ENCODE measurements at regions of chr3 and their contacts with region 1.

Region 1: GRCh38 chr3:120095226-120095978 is 1.2 kb upstream of the GSK3B start:
- DNase-seq: peak; percentile 91
- H3K4me3 Mint-ChIP-seq: no peak overlapping the region
- H3K27ac Mint-ChIP-seq: no peak overlapping the region
- H3K4me1 Mint-ChIP-seq: peaks cover 19% of the 10 kb centered on the region
- H3K27me3 Mint-ChIP-seq: no peaks in the 10 kb centered on the region

Region 2: GRCh38 chr3:118713502-118714207 is 1381.7 kb before region 1 on chr3:
- intact Hi-C with region 1: no loop called
- DNase-seq: no peak
- H3K4me3 Mint-ChIP-seq: no peak overlapping the region
- H3K27ac Mint-ChIP-seq: no peak overlapping the region
- H3K4me1 Mint-ChIP-seq: no peaks in the 10 kb centered on the region
- H3K27me3 Mint-ChIP-seq: no peaks in the 10 kb centered on the region

Region 3: DNA sequence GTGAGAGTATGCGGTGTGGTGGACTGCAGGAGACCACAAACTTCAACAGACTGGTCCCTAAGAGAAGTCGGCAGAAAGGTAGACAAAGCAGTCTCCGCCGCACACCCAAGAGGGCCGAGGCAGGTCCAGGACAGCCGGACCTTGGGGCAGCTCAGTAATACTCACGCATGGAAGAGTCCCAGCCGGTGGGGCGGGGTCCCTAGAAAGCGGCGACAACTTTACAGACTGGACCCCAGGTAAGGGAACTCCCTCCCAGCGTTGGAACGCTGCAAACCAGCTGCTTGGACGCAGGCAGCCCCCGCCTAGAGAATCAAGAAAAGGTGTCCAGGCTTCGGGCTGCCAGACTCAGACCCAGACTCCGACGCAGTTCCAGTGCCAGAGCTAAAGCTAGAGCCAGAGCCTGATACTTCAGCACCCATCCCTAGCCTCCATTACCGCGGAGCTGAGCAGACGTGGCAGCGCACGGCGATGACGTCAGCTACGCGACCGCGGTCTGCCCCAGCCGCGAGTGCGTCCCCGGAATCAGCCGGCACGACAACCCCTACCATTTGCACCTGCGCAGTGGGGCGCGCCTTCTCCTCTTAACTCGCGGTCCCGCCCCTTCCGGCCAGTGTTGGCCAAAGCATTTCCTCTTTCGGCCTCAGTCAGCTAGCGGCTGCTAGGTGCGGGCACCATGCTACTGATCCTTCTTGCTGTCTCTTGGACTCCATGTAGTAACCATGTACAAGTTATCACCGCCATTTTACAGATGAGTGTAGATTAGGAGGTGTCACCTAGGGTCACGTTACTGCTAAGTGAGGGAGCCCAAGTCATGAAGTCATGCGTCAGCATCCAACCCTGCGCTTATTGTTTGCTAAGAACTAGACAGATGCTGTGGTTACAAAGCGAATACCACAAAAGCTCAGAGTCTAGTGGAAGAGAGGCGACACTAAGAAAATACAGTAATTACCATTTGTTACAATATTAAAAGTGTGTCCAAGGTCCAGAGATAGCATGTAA is 631.9 kb before region 1 on chr3 and contains the start of gene TMEM39A:
- intact Hi-C with region 1: loop called (anchors 1 kb)
- DNase-seq: peak; percentile 98
- H3K4me3 Mint-ChIP-seq: peak within 1 kb of the TSS; percentile 98
- H3K27ac Mint-ChIP-seq: peak within 1 kb of the TSS; percentile 97
- H3K4me1 Mint-ChIP-seq: peaks cover 49% of the 10 kb centered on the region
- H3K27me3 Mint-ChIP-seq: peaks cover 3% of the 10 kb centered on the region
- total RNA-seq, gene TMEM39A: 51.3 and 56.9 TPM in 2 replicates

Region 4: DNA sequence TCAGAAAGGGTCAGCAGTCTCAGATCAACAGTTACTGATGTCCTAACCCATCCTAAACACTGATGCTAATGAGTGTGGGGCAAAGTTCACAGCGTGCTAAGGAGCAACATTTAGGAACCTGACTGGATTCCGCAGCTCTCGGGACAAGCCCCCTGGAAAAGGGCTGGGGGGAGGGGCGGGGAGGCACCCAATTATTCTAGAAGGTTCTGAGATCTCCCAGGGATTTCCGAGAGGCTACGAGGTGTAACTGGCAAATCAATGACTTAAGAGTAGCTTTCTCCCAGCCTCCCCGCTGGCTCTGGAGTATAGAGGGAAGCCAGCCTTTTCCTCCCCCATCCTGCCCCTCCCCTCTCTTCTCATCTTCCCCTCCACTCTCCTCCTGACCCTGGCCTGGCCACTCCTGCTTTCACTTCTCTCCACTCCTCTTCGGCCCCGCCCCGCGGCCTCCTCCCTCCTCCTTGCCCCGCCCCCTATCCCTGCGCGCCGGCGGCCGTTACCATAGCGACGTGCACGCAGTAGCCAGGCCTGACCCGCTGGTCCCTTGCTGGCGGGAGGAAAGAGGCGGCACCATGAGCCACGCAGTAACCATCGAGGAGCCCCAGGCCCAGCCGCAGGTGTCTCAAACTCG is 392.8 kb before region 1 on chr3 and contains the start of gene CFAP91:
- intact Hi-C with region 1: loop called (anchors 2 kb)
- DNase-seq: peak; percentile 78
- H3K4me3 Mint-ChIP-seq: peak within 1 kb of the TSS; percentile 67
- H3K27ac Mint-ChIP-seq: no peak within 1 kb of the TSS
- H3K4me1 Mint-ChIP-seq: peaks cover 37% of the 10 kb centered on the region
- H3K27me3 Mint-ChIP-seq: peaks cover 29% of the 10 kb centered on the region
- total RNA-seq, gene CFAP91: 0.24 TPM in 1 of 2 replicates, not detected in the other

Region 5: DNA sequence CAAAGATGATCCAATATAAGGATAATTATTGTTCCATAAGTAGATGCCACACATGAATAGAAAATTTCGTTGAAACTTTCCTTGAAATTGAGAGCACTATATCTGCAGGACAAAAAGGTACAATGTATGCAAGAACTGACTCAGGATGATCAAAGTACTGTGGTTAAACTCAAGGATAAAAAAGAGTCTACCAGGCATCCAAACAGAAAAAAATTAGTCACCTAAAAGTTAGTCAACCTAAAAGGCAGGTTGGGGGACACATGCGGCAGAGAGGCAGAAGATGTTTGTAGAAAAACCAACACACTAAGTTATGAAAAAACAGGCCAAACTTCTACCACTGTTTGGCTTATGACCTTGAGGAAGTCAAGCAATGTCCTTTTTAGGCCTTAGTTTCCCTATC is 69.9 kb before region 1 on chr3:
- intact Hi-C with region 1: loop called (anchors 5 kb)
- DNase-seq: no peak
- H3K4me3 Mint-ChIP-seq: no peak overlapping the region
- H3K27ac Mint-ChIP-seq: no peak overlapping the region
- H3K4me1 Mint-ChIP-seq: peaks cover 51% of the 10 kb centered on the region
- H3K27me3 Mint-ChIP-seq: no peaks in the 10 kb centered on the region

Region 6: DNA sequence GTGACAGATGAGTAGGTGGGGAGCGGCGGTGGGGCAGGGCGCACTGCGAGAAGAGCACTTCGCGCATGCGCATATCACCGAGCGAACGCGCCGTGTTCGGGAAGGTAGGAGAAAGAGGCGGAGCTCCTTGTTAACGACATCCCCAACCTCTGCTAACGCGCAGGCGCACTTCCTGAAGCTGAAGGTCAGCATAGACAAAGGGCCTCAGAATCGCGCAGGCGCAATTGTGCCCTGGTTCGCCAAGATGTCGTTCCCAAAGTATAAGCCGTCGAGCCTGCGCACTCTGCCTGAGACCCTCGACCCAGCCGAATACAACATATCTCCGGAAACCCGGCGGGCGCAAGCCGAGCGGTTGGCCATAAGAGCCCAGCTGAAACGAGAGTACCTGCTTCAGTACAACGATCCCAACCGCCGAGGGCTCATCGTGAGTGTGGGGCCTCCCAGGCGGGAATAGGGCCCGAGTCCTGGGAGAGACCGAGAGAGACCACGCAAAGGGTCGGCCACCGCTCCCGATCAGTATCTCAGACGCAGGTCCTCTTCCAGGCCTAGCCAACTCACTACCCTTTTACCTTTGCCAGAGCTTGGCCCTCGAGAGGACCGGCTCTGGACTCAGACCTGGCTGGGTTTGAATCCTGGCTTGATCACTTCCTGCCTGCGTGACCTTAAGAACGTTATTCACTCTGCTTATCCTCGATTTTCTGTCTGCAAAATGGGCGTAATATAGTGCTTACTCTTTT is 500.9 kb after region 1 on chr3 and contains the start of gene NDUFB4:
- intact Hi-C with region 1: loop called (anchors 1 kb)
- DNase-seq: peak; percentile 94
- H3K4me3 Mint-ChIP-seq: peak within 1 kb of the TSS; percentile 91
- H3K27ac Mint-ChIP-seq: peak within 1 kb of the TSS; percentile 96
- H3K4me1 Mint-ChIP-seq: peaks cover 15% of the 10 kb centered on the region
- H3K27me3 Mint-ChIP-seq: no peaks in the 10 kb centered on the region
- total RNA-seq, gene NDUFB4: 107 and 108 TPM in 2 replicates

Measured in activated T-helper 1 cell treated with anti-CD3 and anti-CD28 coated beads, Interleukin-12 subunit alpha, Interleukin-12 subunit beta, Interleukin-2, Interleukin-4 antibody, amounts not matched to agents 30 ng/mL and 10 ng/mL and 1 ng/mL, durations not matched to agents 14 hours and 24 hours and 36 hours (primary cell).